K562 (cell line): ENCODE measurements at regions of chr20 and their contacts with region 1.

Region 1: DNA sequence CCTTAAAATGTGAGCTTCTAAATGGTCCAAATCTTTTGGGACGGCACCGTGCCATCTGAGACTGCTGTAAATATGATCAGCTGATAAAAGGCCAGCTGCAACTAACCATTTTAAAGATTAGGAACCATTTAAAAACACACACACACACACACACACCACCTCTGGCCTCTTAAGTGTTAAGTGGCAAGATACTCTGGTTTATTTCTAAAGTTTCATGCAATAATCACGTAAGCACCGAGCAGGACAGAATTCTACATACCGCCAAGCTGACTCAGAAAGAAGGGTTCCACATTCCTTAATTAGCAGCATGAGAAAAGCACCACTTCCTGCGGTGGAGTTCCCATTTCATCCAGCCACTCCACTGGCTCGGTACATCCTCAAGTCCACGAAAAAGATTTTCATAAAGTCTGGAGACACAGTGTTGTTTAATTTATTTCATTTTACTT is 17.8 kb upstream of the ZNF217 start:
- DNase-seq: peak in 1 of 4 experiments; percentile 66
- ATAC-seq: peak; percentile 2; the same call in 2 of the 3 replicates
- H3K4me3 ChIP-seq: peak overlapping the region; percentile 15; the same call in 1 of the 2 replicates
- H3K27ac ChIP-seq: peak overlapping the region; percentile 81
- H3K4me1 ChIP-seq: peaks cover 24 to 49% of the 10 kb centered on the region in 2 experiments
- H3K27me3 ChIP-seq: no peaks in the 10 kb centered on the region
- CTCF ChIP-seq: no peak
- EP300 ChIP-seq: peak; percentile 57
- POLR2A ChIP-seq: no peak
- RAD21 ChIP-seq: no peak

Region 2: GRCh38 chr20:53594068-53595017 is 17.1 kb before region 1 on chr20:
- CTCF ChIA-PET with region 1: no interaction called
- POLR2A ChIA-PET with region 1: interaction called, 19 read pairs
- in situ Hi-C with region 1: no loop called
- intact Hi-C with region 1: loop called (anchors 2 kb)
- DNase-seq: peak; percentile 85 to 92 (median 88)
- ATAC-seq: peak; percentile 76
- H3K4me3 ChIP-seq: peak overlapping the region; percentile 90
- H3K27ac ChIP-seq: peak overlapping the region; percentile 93
- H3K4me1 ChIP-seq: peaks cover 8 to 15% of the 10 kb centered on the region in 2 experiments; a peak in 4 of 5 replicates
- H3K27me3 ChIP-seq: no peaks in the 10 kb centered on the region
- CTCF ChIP-seq: peak in 2 of 3 experiments; percentile 59 to 79; a peak in 4 of 6 replicates
- EP300 ChIP-seq: no peak
- POLR2A ChIP-seq: no peak
- RAD21 ChIP-seq: peak; percentile 12 to 58; a peak in 2 of 4 replicates

Region 3: DNA sequence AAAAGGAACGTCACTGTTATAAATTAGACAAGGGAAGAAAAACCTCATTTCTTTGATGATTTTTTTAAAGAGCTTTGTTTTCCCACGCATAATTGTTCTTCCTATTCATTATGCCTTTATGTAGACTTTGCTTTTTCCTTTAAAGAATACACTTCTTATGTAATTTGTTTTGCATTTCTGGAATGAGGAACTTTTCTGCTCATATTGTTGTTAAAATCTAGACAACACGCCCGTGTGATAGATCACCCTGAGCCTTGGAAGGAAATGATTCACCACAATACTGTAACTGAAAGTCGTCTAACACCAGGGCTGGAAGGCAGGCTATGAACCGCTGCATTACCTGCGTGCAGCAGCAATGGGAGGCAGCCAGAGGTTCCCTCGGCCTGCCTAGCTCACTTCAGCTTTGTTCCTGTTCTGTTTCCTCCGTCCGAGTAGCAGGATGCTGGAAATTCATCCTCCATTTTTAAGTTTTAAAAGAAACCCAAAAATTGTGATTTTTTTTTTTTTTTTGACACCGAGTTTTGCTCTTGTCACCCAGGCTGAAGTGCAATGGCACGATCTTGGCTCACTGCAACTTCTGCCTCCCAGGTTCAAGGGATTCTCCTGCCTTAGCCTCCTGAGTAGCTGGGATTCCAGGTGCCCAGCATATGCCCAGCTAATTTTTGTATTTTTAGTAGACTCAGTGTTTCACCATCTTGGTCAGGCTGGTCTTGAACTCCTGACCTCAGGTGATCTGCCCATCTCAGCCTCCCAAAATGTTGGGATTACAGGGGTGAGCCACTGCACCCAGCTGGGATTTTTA is 31.8 kb after region 1 on chr20:
- CTCF ChIA-PET with region 1: no interaction called
- POLR2A ChIA-PET with region 1: interaction called, 3 read pairs
- in situ Hi-C with region 1: no loop called
- intact Hi-C with region 1: loop called (anchors 5 kb)
- DNase-seq: peak; percentile 37 to 75 (median 52)
- ATAC-seq: peak; percentile 83
- H3K4me3 ChIP-seq: no peak overlapping the region; the same call in 1 of the 2 replicates
- H3K27ac ChIP-seq: peak overlapping the region; percentile 95
- H3K4me1 ChIP-seq: peaks cover 23 to 25% of the 10 kb centered on the region in 2 experiments
- H3K27me3 ChIP-seq: no peaks in the 10 kb centered on the region
- CTCF ChIP-seq: no peak
- EP300 ChIP-seq: peak; percentile 60; the same call in 1 of the 2 replicates
- POLR2A ChIP-seq: no peak; the same call in none of the 2 replicates
- RAD21 ChIP-seq: peak in 1 of 2 experiments; percentile 9; a peak in 1 of 4 replicates

Region 4: DNA sequence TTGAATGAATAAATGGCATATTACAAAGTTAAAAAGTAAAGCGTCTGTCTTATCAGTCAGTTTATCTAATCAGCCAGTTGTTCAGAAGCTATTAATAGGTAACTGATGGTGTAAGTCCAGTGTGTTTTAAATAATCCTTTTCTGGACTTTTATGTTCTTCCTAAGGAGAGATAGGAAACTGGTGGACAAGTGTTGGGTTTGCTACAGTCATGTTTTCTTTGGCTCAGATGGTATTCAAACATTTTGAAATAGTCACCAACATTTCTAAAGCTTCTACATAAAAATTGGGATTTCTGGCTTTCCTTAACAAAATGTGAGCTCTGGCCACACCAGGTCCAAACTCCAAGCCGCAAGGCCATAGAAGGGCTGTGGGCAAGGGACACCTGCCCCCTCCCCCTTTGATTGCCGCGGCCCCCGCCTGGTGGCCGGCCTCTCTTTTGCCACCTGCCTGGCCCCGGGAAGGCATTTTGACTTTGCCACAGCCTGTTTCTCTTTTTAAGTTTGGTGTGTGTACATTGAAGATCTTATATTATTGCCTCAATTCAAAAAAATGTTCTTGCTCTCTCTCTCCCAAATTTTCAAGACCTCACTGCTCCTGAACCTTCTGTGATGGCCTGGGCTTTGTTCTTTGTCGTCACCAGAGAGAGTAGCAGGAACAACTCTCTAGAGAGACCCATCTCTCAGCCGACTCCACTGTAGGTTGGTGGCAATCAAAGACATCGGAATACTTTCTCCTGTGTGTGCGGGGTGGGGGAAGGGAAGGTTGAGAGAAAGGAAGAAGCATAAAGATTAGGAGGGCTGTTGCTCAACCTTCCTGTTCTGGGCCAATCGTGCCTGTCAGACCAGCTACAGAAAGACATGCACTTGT is 66.2 kb after region 1 on chr20:
- CTCF ChIA-PET with region 1: no interaction called
- POLR2A ChIA-PET with region 1: no interaction called
- in situ Hi-C with region 1: no loop called
- intact Hi-C with region 1: loop called (anchors 2 kb)
- DNase-seq: peak; percentile 44 to 90 (median 68)
- ATAC-seq: peak; percentile 97
- H3K4me3 ChIP-seq: peak overlapping the region; percentile 9; the same call in 1 of the 2 replicates
- H3K27ac ChIP-seq: peak overlapping the region; percentile 82
- H3K4me1 ChIP-seq: peaks cover 8 to 24% of the 10 kb centered on the region in 2 experiments
- H3K27me3 ChIP-seq: no peaks in the 10 kb centered on the region
- CTCF ChIP-seq: 0 out of 6 replicates have a peak, but pooled peaks of 2 of the 3 experiments have one; percentile 20 to 21
- EP300 ChIP-seq: peak; percentile 85
- POLR2A ChIP-seq: peak; percentile 66
- RAD21 ChIP-seq: peak; percentile 30 to 53; a peak in 3 of 4 replicates

Region 5: GRCh38 chr20:53915446-53916172 is 304.1 kb after region 1 on chr20:
- CTCF ChIA-PET with region 1: no interaction called
- POLR2A ChIA-PET with region 1: no interaction called
- in situ Hi-C with region 1: no loop called
- intact Hi-C with region 1: loop called (anchors 2 kb)
- DNase-seq: peak; percentile 84 to 93 (median 87)
- ATAC-seq: peak; percentile 84
- H3K4me3 ChIP-seq: peak overlapping the region; percentile 38
- H3K27ac ChIP-seq: peak overlapping the region; percentile 82
- H3K4me1 ChIP-seq: peaks cover 25 to 41% of the 10 kb centered on the region in 2 experiments; a peak in 3 of 5 replicates
- H3K27me3 ChIP-seq: no peaks in the 10 kb centered on the region
- CTCF ChIP-seq: peak; percentile 76 to 91 (median 87)
- EP300 ChIP-seq: no peak
- POLR2A ChIP-seq: no peak; the same call in 1 of the 2 replicates
- RAD21 ChIP-seq: peak; percentile 78 to 85